ENCODE measurements at regions of chr15 and their contacts with region 1.

Region 1: GRCh38 chr15:66841953-66842681 is 140.1 kb downstream of the SMAD6 start:
- DNase-seq: peak; percentile 84 to 86
- ATAC-seq: peak; percentile 88 to 93 (median 90)
- H3K4me3 ChIP-seq: peak overlapping the region; percentile 6 to 62 (median 55)
- H3K27ac ChIP-seq: peak overlapping the region; percentile 87 to 98 (median 96)
- H3K4me1 ChIP-seq: peaks cover 13 to 55% (median 41%) of the 10 kb centered on the region in 9 donors
- H3K27me3 ChIP-seq: no peaks in the 10 kb centered on the region
- CTCF ChIP-seq: peak in 1 of 9 donors; percentile 8

Region 2: DNA sequence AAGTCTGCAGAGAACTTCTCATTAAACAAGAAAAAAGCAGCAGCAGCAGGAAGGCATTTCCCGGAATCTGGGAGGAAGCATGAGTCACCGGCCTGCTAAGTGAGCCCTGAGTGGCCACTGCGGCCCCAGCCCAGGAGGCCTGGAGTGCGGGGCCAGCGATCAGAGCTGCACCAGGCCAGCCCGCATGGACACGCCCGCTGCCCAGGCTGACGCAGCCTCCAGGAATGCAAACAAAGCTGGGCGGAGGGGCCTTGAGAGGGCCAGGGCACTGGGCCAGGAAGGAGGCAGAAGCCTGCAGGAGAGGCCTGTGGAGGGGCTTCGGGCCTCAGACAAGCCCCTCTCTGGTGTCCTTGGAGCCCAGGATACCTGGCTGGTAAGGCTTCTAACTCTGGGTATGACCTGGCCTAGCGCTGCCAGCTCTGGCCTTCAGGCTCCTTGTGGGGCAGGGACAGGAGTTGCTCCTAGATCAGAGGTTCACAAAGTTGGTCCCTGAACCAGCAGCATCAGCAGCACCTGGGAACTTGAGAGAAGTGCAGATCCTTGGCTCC is 38.9 kb before region 1 on chr15:
- intact Hi-C with region 1: loop called in 3 of 10 experiments (anchors 1 to 5 kb)
- DNase-seq: peak; percentile 84 to 85
- ATAC-seq: peak; percentile 96 to 99 (median 98)
- H3K4me3 ChIP-seq: peak overlapping the region in 1 of 10 donors; percentile 9
- H3K27ac ChIP-seq: peak overlapping the region; percentile 62 to 86 (median 80)
- H3K4me1 ChIP-seq: peaks cover 13 to 38% (median 24%) of the 10 kb centered on the region in 9 donors
- H3K27me3 ChIP-seq: no peaks in the 10 kb centered on the region
- CTCF ChIP-seq: no peak

Region 3: GRCh38 chr15:66824424-66824823 is 17.7 kb before region 1 on chr15:
- intact Hi-C with region 1: loop called in 1 of 10 experiments (anchors 2 kb)
- DNase-seq: no peak
- ATAC-seq: peak in 2 of 8 donors; percentile 19 to 41
- H3K4me3 ChIP-seq: no peak overlapping the region
- H3K27ac ChIP-seq: no peak overlapping the region
- H3K4me1 ChIP-seq: peaks cover 0 to 19% (median 0%) of the 10 kb centered on the region in 9 donors
- H3K27me3 ChIP-seq: no peaks in the 10 kb centered on the region
- CTCF ChIP-seq: no peak

Region 4: DNA sequence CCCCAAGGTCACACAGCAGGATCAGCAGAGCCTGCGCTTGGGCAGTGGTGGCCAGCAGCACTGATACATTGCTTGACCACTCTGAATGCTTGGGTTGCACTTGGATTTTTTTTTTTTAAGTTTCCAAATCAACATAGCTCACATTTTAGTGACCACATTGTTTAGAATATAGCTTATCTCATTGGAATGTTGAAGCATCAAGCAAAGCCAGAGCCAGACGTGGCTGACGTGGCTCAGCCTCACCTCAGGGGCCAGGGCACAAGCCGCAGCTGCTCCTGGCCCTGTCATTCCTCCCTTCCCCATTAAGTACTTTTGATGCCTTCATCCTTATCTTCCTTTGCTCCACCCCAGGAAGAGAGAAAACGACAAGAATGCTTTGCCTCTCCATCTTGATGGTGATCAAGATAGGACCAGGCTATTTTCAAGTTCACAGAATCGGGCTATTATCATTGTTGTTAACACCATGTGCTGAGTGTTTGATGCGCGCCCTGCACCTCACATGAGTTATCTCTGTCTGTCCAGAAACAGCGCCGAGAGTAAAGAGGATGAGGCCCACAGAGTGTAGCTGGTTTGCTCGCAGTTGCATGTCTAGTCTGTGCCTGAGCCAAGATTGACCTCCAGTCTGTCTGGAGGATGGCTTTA is 336.6 kb after region 1 on chr15:
- intact Hi-C with region 1: no loop called
- DNase-seq: no peak
- ATAC-seq: peak in 4 of 8 donors; percentile 28 to 63 (median 38)
- H3K4me3 ChIP-seq: no peak overlapping the region
- H3K27ac ChIP-seq: peak overlapping the region in 6 of 10 donors; percentile 31 to 53 (median 38)
- H3K4me1 ChIP-seq: peaks cover 0 to 50% (median 33%) of the 10 kb centered on the region in 9 donors
- H3K27me3 ChIP-seq: no peaks in the 10 kb centered on the region
- CTCF ChIP-seq: no peak

Measured in heart right ventricle (tissue), 16 donors.